Calu3 (cell line): ENCODE measurements at regions of chr17 and their contacts with region 1.

Region 1: DNA sequence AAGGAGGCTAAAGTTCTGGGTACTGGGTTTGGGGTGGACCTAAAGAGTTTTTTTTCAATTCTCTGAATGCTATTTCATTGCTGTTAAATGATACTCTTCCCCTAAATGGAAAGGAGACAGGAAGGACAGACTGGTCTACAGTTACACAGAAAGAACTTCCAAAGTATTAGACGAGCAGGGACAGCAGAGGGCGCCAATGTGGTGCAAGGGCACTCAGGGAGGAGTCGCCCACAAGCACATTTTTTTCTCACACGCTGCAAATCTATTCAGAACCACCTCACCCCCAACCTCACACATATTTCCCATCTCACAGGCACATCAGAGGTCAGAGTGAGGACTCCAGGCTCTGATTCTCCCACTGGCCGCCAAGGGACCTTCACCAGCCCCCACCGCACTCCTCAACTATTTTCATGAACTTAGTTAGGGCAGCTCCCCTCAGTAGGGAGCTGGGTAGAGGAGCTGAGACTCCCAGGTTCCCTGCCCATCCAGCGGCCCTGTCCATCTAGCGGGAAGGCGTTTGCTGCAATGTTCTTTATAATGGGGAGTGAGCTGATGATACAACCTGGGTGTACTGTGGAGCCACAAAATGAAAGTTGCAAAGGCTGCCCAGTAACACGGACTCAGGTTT is 6.8 kb upstream of the CA4 start:
- DNase-seq: peak; percentile 86
- H3K4me3 Mint-ChIP-seq: peak overlapping the region; percentile 45
- H3K27ac Mint-ChIP-seq: peak overlapping the region; percentile 20
- H3K4me1 Mint-ChIP-seq: peaks cover 19% of the 10 kb centered on the region
- H3K27me3 Mint-ChIP-seq: peaks cover 44% of the 10 kb centered on the region
- CTCF ChIP-seq: peak; percentile 50

Region 2: GRCh38 chr17:60174035-60174434 is 31.0 kb after region 1 on chr17:
- CTCF ChIA-PET with region 1: no interaction called
- intact Hi-C with region 1: loop called (anchors 2 kb)
- DNase-seq: no peak
- H3K4me3 Mint-ChIP-seq: no peak overlapping the region
- H3K27ac Mint-ChIP-seq: no peak overlapping the region
- H3K4me1 Mint-ChIP-seq: peaks cover 9% of the 10 kb centered on the region
- H3K27me3 Mint-ChIP-seq: no peaks in the 10 kb centered on the region
- CTCF ChIP-seq: no peak

Region 3: GRCh38 chr17:60231234-60231633 is 88.2 kb after region 1 on chr17:
- CTCF ChIA-PET with region 1: interaction called, 8 read pairs
- intact Hi-C with region 1: loop called (anchors 1 kb)
- DNase-seq: no peak
- H3K4me3 Mint-ChIP-seq: no peak overlapping the region
- H3K27ac Mint-ChIP-seq: no peak overlapping the region
- H3K4me1 Mint-ChIP-seq: no peaks in the 10 kb centered on the region
- H3K27me3 Mint-ChIP-seq: no peaks in the 10 kb centered on the region
- CTCF ChIP-seq: no peak